H1 (cell line): ENCODE measurements at regions of chr12 and their contacts with region 1.

Region 1: DNA sequence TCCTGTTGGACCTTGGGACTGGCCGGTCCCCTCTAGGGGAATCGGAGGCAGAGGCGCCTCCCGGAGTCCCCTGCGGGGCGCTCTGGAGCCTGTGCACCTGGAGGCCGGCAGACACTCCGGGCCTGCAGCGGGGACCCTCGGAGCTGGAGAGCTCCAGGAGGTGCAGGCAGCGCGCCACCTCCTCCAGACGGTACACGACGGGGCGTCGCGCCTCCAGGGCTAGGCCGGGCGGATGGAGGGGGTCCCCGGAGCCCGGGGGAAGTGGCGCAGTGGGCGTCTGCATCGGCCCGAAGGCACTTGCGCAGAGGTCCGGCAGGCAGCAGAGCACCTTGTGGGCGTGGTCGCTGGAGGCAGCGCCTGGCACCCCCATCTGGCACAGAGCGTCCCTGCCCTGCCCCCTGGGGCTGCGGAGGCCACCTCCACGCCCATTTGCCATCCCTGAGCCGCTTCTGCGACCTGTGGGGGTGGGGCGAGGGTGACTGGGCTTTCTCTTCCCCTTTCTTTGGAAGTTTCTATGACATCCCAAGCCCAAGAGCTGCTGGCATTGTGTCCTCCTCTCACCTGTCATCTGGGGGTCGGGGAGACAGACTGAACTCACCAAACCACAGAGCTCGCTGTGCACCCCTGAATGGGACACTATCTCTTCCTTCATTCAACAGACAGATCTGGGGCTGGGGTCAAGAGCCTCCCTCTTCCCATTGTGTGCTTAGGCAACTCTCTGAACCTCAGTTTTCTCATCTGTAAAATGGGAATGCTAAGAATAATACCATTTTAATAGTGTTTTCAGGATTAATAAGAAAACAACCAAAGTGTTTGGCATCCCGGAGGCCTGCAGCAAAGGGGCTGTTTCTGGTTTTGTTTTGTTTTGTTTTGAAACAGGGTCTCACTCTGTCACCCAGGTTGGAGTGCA is 37.5 kb upstream of the CORO1C start:
- DNase-seq: peak; percentile 49 to 83
- H3K4me3 ChIP-seq: peak overlapping the region; percentile 32 to 61 (median 50)
- H3K27ac ChIP-seq: no peak overlapping the region
- H3K4me1 ChIP-seq: peaks cover 0 to 13% (median 2%) of the 10 kb centered on the region in 4 experiments; a peak in 4 of 7 replicates
- H3K27me3 ChIP-seq: no peaks in the 10 kb centered on the region
- CTCF ChIP-seq: no peak
- EP300 ChIP-seq: no peak
- POLR2A ChIP-seq: no peak
- RAD21 ChIP-seq: peak in 1 of 2 experiments; percentile 1; a peak in 1 of 4 replicates

Region 2: GRCh38 chr12:108613548-108613947 is 155.3 kb before region 1 on chr12:
- CTCF ChIA-PET with region 1: no interaction called
- POLR2A ChIA-PET with region 1: no interaction called
- DNase-seq: no peak
- H3K4me3 ChIP-seq: no peak overlapping the region
- H3K27ac ChIP-seq: no peak overlapping the region
- H3K4me1 ChIP-seq: peaks cover 0 to 12% (median 4%) of the 10 kb centered on the region in 4 experiments; a peak in 5 of 7 replicates
- H3K27me3 ChIP-seq: no peaks in the 10 kb centered on the region
- CTCF ChIP-seq: no peak
- EP300 ChIP-seq: no peak
- POLR2A ChIP-seq: no peak
- RAD21 ChIP-seq: no peak

Region 3: GRCh38 chr12:108627134-108627920 is 141.5 kb before region 1 on chr12:
- CTCF ChIA-PET with region 1: no interaction called
- POLR2A ChIA-PET with region 1: no interaction called
- DNase-seq: no peak
- H3K4me3 ChIP-seq: no peak overlapping the region
- H3K27ac ChIP-seq: no peak overlapping the region
- H3K4me1 ChIP-seq: peaks cover 0 to 5% (median 4%) of the 10 kb centered on the region in 4 experiments; a peak in 5 of 7 replicates
- H3K27me3 ChIP-seq: no peaks in the 10 kb centered on the region
- CTCF ChIP-seq: no peak
- EP300 ChIP-seq: no peak
- POLR2A ChIP-seq: no peak
- RAD21 ChIP-seq: no peak

Region 4: GRCh38 chr12:108750526-108751402 is 18.1 kb before region 1 on chr12:
- CTCF ChIA-PET with region 1: interaction called, 15 read pairs
- POLR2A ChIA-PET with region 1: interaction called, 3 read pairs
- DNase-seq: no peak
- H3K4me3 ChIP-seq: no peak overlapping the region
- H3K27ac ChIP-seq: no peak overlapping the region
- H3K4me1 ChIP-seq: no peaks in the 10 kb centered on the region
- H3K27me3 ChIP-seq: no peaks in the 10 kb centered on the region
- CTCF ChIP-seq: no peak
- EP300 ChIP-seq: no peak
- POLR2A ChIP-seq: no peak
- RAD21 ChIP-seq: no peak

Region 5: GRCh38 chr12:108757856-108758255 is 11.0 kb before region 1 on chr12:
- CTCF ChIA-PET with region 1: interaction called, 42 read pairs
- POLR2A ChIA-PET with region 1: interaction called, 3 read pairs
- DNase-seq: no peak
- H3K4me3 ChIP-seq: no peak overlapping the region
- H3K27ac ChIP-seq: no peak overlapping the region
- H3K4me1 ChIP-seq: no peaks in the 10 kb centered on the region
- H3K27me3 ChIP-seq: no peaks in the 10 kb centered on the region
- CTCF ChIP-seq: no peak
- EP300 ChIP-seq: no peak
- POLR2A ChIP-seq: no peak
- RAD21 ChIP-seq: no peak

Region 6: DNA sequence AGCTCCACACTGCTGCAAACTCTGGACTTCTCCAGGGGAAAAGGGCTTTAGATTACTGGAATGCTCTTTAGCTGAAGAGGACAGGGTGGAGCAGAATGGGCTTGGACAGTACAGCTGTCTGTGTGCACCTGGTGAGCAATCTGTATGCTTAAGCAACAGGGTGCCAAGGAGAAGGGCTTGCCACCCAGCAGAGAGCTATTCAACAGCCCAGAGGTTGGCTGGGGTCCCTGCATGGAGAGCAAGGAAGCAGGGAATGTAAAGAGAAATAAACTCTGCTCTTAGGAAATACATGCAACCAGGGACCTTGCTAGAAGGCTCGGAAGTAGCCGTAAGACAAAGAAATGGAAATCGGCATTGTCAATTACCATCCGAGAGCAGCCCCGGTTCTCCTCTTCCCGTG is 15.4 kb after region 1 on chr12:
- CTCF ChIA-PET with region 1: interaction called, 17 read pairs
- POLR2A ChIA-PET with region 1: no interaction called
- DNase-seq: no peak
- H3K4me3 ChIP-seq: no peak overlapping the region
- H3K27ac ChIP-seq: no peak overlapping the region
- H3K4me1 ChIP-seq: peaks cover 5 to 16% (median 8%) of the 10 kb centered on the region in 4 experiments; a peak in 6 of 7 replicates
- H3K27me3 ChIP-seq: no peaks in the 10 kb centered on the region
- CTCF ChIP-seq: no peak
- EP300 ChIP-seq: no peak
- POLR2A ChIP-seq: no peak
- RAD21 ChIP-seq: no peak